ENCODE measurements at regions of chr2 and their contacts with region 1.

Region 1: DNA sequence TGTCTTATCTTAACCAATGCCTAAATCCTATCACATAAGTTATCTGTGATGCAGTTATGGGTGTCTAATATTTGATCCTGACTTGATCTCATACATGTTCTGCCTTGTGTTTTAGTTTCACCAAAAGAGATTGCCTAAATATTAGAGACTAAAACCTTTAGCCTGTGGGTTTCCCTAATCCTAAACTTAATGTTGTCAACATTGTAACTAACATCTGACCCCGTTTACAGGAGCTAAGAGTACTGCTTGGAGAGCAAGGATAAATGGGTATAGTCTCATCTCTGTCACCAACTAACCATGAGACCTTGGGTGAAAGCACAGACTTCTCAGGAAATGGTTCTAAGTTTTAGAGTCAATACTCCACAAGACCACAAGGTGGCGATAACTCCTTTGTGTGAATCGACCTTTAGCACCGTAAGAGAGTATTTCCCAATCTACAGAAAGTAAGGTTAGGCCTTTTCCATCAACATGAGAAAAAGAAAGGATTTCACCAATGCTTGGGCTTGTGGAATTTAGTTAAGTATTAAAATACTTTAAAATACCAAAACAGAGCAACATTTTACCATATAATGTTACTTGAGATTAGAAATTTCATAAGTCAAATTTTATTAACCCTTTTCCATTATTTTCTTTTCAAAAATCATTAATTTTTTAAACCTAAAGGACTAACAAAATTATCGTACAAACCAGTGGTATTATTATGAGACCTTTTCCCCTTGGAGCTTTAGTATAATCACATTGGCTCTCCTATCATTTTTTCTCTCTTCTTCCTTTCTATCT is 60.5 kb downstream of the G6PC2 start:
- DNase-seq: no peak
- ATAC-seq: peak; percentile 78 to 84
- H3K4me3 ChIP-seq: no peak overlapping the region
- H3K27ac ChIP-seq: no peak overlapping the region
- H3K4me1 ChIP-seq: no peaks in the 10 kb centered on the region
- H3K27me3 ChIP-seq: no peaks in the 10 kb centered on the region

Region 2: DNA sequence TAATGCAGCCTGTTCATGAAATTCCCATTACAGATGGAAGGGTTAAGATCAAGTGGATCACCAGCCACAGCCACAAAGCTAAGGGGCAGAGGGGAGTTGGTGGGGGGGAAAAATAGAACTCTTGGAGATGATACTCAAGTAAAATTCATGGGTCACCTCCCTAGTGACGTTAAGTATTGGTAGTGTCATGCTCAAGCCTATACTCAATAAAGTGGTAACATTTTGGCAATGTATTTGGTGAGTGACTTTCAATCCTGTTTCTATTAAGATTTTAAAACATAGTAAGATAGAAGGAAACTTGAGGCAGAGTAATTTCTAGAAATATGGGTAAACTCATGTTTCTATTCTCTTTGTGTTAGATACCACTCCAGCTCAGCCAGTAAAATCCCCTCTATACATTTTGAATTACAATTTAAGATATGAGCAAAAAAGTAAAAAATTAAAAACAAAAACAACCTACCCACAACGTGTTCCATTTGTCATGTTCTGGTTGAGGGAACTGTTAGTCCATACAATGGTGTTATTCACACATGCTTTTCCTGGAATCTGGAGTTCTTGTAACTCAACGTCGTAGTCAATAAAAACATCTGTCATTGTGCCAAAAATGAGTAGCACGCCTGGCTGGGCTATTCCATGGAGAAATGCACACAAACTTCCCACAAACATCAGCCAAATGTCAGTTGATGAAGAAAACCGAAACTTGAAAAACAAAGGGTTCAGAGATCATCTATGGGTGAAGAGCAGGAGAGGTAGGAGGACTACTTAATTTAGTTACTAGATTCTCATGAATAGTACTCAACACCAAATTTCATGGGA is 51.4 kb after region 1 on chr2:
- intact Hi-C with region 1: loop called in 1 of 4 experiments (anchors 10 kb)
- DNase-seq: no peak
- ATAC-seq: peak; percentile 23 to 68
- H3K4me3 ChIP-seq: no peak overlapping the region
- H3K27ac ChIP-seq: peak overlapping the region; percentile 30
- H3K4me1 ChIP-seq: no peaks in the 10 kb centered on the region
- H3K27me3 ChIP-seq: no peaks in the 10 kb centered on the region

Region 3: GRCh38 chr2:169080250-169081069 is 118.8 kb after region 1 on chr2:
- intact Hi-C with region 1: loop called in 1 of 4 experiments (anchors 10 kb)
- DNase-seq: no peak
- ATAC-seq: peak in 1 of 2 donors; percentile 17
- H3K4me3 ChIP-seq: no peak overlapping the region
- H3K27ac ChIP-seq: no peak overlapping the region
- H3K4me1 ChIP-seq: peaks cover 3% of the 10 kb centered on the region
- H3K27me3 ChIP-seq: no peaks in the 10 kb centered on the region

Region 4: DNA sequence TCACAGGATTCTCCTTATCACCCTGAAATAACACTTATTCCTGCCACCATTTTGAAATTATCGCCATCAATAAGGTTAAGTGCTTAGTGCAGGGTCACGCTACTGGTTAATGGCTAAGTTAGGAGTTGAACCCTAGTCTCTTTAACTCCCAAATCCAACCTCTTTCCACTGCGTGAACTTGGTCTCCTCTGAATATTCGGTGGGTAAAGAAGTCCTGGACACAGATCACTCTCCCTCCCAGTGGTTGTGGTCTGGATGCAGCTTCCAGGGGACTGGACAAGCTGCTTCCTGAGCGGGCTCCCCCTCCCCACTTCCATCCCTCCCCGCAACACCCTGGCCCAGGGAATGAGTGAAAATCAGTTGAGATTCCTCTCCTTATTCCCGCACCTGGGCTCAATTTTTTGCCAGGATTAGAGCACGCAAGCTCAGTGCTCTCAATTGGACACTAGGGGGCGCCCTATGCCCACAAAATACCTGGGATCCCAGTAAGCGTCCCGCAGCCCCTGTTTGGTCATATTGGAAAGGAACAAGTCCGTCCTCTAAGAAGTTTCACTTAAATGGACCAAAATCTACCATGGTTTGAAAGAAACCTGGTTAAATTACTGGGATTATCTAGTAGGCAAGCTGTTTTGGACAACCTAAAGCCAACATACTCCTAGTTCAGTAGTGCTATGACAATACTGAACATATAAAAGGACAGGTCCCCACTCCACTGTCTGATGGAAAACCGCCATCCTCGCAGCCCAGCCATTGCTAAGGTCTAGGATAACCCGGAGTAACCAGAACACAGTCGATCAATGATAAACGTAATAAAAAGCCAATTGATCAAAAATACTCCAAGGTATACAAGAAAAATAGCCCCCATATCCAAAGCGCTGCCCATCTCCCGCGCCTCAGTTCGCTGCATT is 148.1 kb after region 1 on chr2:
- intact Hi-C with region 1: loop called in 2 of 4 experiments (anchors 10 kb)
- DNase-seq: peak; percentile 74 to 85 (median 80)
- ATAC-seq: peak; percentile 83 to 86
- H3K4me3 ChIP-seq: no peak overlapping the region
- H3K27ac ChIP-seq: no peak overlapping the region
- H3K4me1 ChIP-seq: no peaks in the 10 kb centered on the region
- H3K27me3 ChIP-seq: no peaks in the 10 kb centered on the region

Region 5: GRCh38 chr2:169141713-169142352 is 180.2 kb after region 1 on chr2:
- intact Hi-C with region 1: loop called (anchors 5 to 10 kb)
- DNase-seq: peak in 1 of 3 donors; percentile 25
- ATAC-seq: peak; percentile 51 to 66
- H3K4me3 ChIP-seq: no peak overlapping the region
- H3K27ac ChIP-seq: no peak overlapping the region
- H3K4me1 ChIP-seq: no peaks in the 10 kb centered on the region
- H3K27me3 ChIP-seq: no peaks in the 10 kb centered on the region

Region 6: DNA sequence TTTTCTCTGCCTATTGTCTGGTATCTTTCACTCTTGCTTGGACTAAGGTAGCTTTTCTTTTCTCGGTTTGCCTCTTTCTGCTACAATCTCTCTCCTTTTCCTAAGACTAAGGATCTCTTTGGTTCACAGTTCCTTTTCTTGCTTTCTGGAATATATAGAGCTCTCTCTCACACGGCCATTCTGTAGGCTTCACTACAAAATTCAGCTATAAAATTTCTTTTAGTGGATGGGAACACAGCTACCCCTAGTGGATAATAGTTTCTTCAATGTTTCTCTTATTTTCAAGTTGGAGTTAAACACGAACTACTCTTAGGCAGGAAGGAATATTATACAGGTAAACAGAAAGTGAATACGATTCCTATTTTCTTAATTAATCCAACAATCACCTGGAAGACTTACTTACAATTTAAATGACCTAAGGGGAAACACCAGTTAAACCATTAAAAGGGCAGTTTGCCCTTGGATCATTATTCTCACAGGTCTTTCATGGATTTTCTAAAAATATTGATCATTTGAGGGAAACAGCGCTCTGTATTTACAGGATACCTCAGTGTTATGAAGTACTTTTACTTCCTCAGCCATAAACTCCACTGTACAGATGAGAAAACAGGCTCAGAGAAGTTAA is 260.2 kb after region 1 on chr2:
- intact Hi-C with region 1: loop called in 1 of 4 experiments (anchors 5 kb)
- DNase-seq: no peak
- ATAC-seq: no peak
- H3K4me3 ChIP-seq: no peak overlapping the region
- H3K27ac ChIP-seq: no peak overlapping the region
- H3K4me1 ChIP-seq: no peaks in the 10 kb centered on the region
- H3K27me3 ChIP-seq: no peaks in the 10 kb centered on the region